CD8-positive, alpha-beta T cell (primary cell): ENCODE measurements at regions of chr12 and their contacts with region 1.

Region 1: GRCh38 chr12:113831016-113831415 is 135.1 kb downstream of the RBM19 start:
- DNase-seq: no peak
- ATAC-seq: no peak
- H3K4me3 ChIP-seq: no peak overlapping the region
- H3K4me3 Mint-ChIP-seq: no peak overlapping the region
- H3K27ac ChIP-seq: no peak overlapping the region
- H3K27ac Mint-ChIP-seq: no peak overlapping the region
- H3K4me1 ChIP-seq: no peaks in the 10 kb centered on the region
- H3K4me1 Mint-ChIP-seq: no peaks in the 10 kb centered on the region
- H3K27me3 ChIP-seq: no peaks in the 10 kb centered on the region
- H3K27me3 Mint-ChIP-seq: no peaks in the 10 kb centered on the region
- CTCF ChIP-seq: no peak

Region 2: DNA sequence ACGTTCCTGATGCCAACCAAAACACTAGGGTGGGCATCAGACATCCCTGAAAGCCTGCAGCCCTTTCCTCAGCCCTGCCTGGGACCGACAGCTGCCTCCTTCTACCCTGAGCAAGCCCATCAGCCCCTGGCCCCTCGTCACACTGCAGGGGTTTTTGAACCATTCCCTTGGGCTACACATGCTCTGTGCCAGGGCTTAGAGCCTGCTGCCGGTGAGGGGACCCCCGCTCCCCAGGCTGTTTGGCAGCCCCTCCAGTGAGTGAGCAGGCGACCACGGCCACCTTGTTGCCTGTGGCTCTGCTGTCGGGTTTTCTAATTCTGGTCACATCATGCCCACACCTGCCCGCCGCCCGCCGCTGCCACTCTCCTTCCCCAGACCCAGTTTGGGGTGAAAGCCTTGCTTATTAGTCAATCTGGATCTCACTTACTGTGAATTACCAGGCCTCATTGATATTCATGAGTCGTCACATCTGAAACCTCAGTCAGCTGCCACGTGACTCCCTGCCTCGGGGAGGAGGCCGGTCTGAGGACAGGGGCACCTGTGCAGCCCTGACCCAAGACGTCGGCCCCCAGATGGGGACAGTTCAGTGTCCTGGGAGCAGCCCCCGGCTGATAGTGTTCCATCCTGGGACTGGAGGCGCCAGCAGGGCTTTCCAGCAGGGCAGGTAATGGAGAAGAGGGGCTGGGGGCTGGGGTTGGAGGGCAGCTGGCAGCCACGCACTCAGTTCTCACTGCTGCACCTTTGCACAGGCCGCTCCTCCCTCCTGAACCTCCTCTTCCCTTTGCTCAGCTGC is 27.9 kb before region 1 on chr12:
- CTCF ChIA-PET with region 1: no interaction called
- POLR2A ChIA-PET with region 1: no interaction called
- intact Hi-C with region 1: loop called in 1 of 2 experiments (anchors 1 kb)
- DNase-seq: no peak
- ATAC-seq: no peak
- H3K4me3 ChIP-seq: no peak overlapping the region
- H3K4me3 Mint-ChIP-seq: no peak overlapping the region
- H3K27ac ChIP-seq: no peak overlapping the region
- H3K27ac Mint-ChIP-seq: no peak overlapping the region
- H3K4me1 ChIP-seq: no peaks in the 10 kb centered on the region
- H3K4me1 Mint-ChIP-seq: no peaks in the 10 kb centered on the region
- H3K27me3 ChIP-seq: no peaks in the 10 kb centered on the region
- H3K27me3 Mint-ChIP-seq: no peaks in the 10 kb centered on the region
- CTCF ChIP-seq: no peak

Region 3: GRCh38 chr12:113844495-113845210 is 13.6 kb after region 1 on chr12:
- CTCF ChIA-PET with region 1: no interaction called
- POLR2A ChIA-PET with region 1: no interaction called
- intact Hi-C with region 1: no loop called
- DNase-seq: no peak
- ATAC-seq: no peak
- H3K4me3 ChIP-seq: no peak overlapping the region
- H3K4me3 Mint-ChIP-seq: no peak overlapping the region
- H3K27ac ChIP-seq: no peak overlapping the region
- H3K27ac Mint-ChIP-seq: no peak overlapping the region
- H3K4me1 ChIP-seq: no peaks in the 10 kb centered on the region
- H3K4me1 Mint-ChIP-seq: peaks cover 4% of the 10 kb centered on the region
- H3K27me3 ChIP-seq: no peaks in the 10 kb centered on the region
- H3K27me3 Mint-ChIP-seq: no peaks in the 10 kb centered on the region
- CTCF ChIP-seq: no peak

Region 4: GRCh38 chr12:113899561-113900471 is 68.8 kb after region 1 on chr12:
- CTCF ChIA-PET with region 1: no interaction called
- POLR2A ChIA-PET with region 1: no interaction called
- intact Hi-C with region 1: loop called in 1 of 2 experiments (anchors 2 kb)
- DNase-seq: no peak
- ATAC-seq: no peak
- H3K4me3 ChIP-seq: no peak overlapping the region
- H3K4me3 Mint-ChIP-seq: no peak overlapping the region
- H3K27ac ChIP-seq: no peak overlapping the region
- H3K27ac Mint-ChIP-seq: no peak overlapping the region
- H3K4me1 ChIP-seq: no peaks in the 10 kb centered on the region
- H3K4me1 Mint-ChIP-seq: no peaks in the 10 kb centered on the region
- H3K27me3 ChIP-seq: no peaks in the 10 kb centered on the region
- H3K27me3 Mint-ChIP-seq: no peaks in the 10 kb centered on the region
- CTCF ChIP-seq: no peak